ENCODE measurements at regions of chr19 and their contacts with region 1.

Region 1: GRCh38 chr19:23969630-23970029 is 54.9 kb downstream of the ZNF726 start:
- DNase-seq: no peak
- H3K4me3 ChIP-seq: no peak overlapping the region
- H3K27ac ChIP-seq: no peak overlapping the region
- H3K4me1 ChIP-seq: no peaks in the 10 kb centered on the region
- H3K27me3 ChIP-seq: no peaks in the 10 kb centered on the region
- CTCF ChIP-seq: no peak
- POLR2A ChIP-seq: no peak

Region 2: DNA sequence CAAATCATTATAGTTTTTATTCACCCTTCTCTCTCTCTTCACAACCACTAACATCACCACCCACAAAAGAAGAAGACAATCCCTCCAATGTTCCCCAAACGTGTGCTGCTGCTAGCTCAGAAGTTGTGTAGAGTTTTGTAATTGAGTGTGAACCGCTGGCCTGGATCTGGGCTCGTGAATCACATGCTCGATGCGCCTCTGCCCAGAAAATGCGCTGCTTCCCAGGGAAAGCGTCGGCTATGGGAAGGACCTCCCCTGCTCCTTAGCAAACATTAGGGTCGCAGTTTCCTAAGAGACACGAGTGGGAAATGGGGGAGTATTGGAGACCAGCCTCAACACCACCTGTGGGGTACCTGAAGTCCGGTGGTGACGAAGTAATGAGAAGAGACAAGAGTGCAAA is 93.4 kb before region 1 on chr19:
- intact Hi-C with region 1: loop called (anchors 10 kb)
- DNase-seq: no peak
- H3K4me3 ChIP-seq: no peak overlapping the region
- H3K27ac ChIP-seq: no peak overlapping the region
- H3K4me1 ChIP-seq: no peaks in the 10 kb centered on the region
- H3K27me3 ChIP-seq: no peaks in the 10 kb centered on the region
- CTCF ChIP-seq: no peak
- POLR2A ChIP-seq: no peak

Region 3: GRCh38 chr19:24062190-24062589 is 92.6 kb after region 1 on chr19:
- intact Hi-C with region 1: no loop called
- DNase-seq: no peak
- H3K4me3 ChIP-seq: no peak overlapping the region
- H3K27ac ChIP-seq: no peak overlapping the region
- H3K4me1 ChIP-seq: no peaks in the 10 kb centered on the region
- H3K27me3 ChIP-seq: no peaks in the 10 kb centered on the region
- CTCF ChIP-seq: no peak
- POLR2A ChIP-seq: no peak